B cell (primary cell): ENCODE measurements at regions of chr16 and their contacts with region 1.

Region 1: DNA sequence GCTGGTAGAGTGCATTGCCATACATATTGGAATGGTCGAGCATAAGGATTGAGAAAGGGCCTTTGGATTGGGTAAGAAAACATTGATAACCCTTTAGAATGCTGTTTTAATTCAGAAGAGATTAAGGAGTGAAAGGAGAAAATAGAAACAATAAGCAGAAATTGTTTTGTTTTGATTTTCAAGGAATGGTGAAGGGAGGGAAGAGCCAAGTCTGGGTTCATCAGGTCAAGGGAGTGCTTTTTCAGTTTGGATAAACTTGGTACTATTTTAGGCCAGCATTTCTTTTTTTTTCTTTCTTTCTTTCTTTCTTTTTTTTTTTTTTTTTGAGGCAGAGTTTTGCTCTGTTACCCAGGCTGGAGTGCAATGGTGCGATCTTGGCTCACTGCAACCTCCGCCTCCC is 50.3 kb downstream of the SNTB2 start:
- DNase-seq: no peak
- ATAC-seq: no peak
- H3K4me3 ChIP-seq: no peak overlapping the region
- H3K4me3 Mint-ChIP-seq: no peak overlapping the region
- H3K27ac ChIP-seq: no peak overlapping the region
- H3K27ac Mint-ChIP-seq: no peak overlapping the region
- H3K4me1 ChIP-seq: no peaks in the 10 kb centered on the region
- H3K4me1 Mint-ChIP-seq: no peaks in the 10 kb centered on the region
- H3K27me3 ChIP-seq: no peaks in the 10 kb centered on the region
- H3K27me3 Mint-ChIP-seq: no peaks in the 10 kb centered on the region
- CTCF ChIP-seq: no peak

Region 2: DNA sequence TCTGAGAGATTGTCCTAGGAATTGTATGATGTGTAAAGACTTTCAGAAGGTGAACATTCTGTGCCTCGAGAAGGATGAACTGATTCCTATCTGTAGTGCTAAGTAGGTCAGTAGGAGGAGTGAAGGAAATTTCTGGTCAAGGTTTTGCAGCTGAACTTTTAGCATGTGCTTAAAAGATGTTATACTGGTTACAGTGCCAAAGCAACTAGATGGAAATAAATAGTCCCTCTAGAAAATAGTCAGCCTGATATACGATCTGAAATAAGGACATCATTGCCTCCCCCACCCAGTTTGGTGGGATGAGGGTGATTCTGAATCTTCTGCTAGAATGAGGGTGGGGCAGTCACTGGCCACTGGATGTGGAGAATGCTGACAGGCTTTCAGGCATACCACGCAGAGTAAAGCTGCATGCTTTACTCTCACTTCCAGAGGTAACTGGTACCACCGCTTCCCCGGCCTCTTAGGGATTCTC is 16.6 kb after region 1 on chr16:
- CTCF ChIA-PET with region 1: no interaction called
- POLR2A ChIA-PET with region 1: interaction called, 12 read pairs
- intact Hi-C with region 1: no loop called
- DNase-seq: no peak
- ATAC-seq: no peak
- H3K4me3 ChIP-seq: no peak overlapping the region
- H3K4me3 Mint-ChIP-seq: no peak overlapping the region
- H3K27ac ChIP-seq: no peak overlapping the region
- H3K27ac Mint-ChIP-seq: no peak overlapping the region
- H3K4me1 ChIP-seq: peaks cover 1 to 2% of the 10 kb centered on the region in 2 donors
- H3K4me1 Mint-ChIP-seq: peaks cover 3% of the 10 kb centered on the region
- H3K27me3 ChIP-seq: no peaks in the 10 kb centered on the region
- H3K27me3 Mint-ChIP-seq: no peaks in the 10 kb centered on the region
- CTCF ChIP-seq: no peak